GM12878 (cell line): ENCODE measurements at regions of chr6 and their contacts with region 1.

Region 1: GRCh38 chr6:47097092-47097945 is 55.2 kb upstream of the ADGRF1 start:
- DNase-seq: peak; percentile 3
- ATAC-seq: peak; percentile 96
- H3K4me3 ChIP-seq: no peak overlapping the region
- H3K27ac ChIP-seq: no peak overlapping the region
- H3K4me1 ChIP-seq: no peaks in the 10 kb centered on the region
- H3K27me3 ChIP-seq: no peaks in the 10 kb centered on the region
- CTCF ChIP-seq: peak; percentile 66 to 84 (median 66)
- EP300 ChIP-seq: no peak
- POLR2A ChIP-seq: no peak
- RAD21 ChIP-seq: peak; percentile 99

Region 2: DNA sequence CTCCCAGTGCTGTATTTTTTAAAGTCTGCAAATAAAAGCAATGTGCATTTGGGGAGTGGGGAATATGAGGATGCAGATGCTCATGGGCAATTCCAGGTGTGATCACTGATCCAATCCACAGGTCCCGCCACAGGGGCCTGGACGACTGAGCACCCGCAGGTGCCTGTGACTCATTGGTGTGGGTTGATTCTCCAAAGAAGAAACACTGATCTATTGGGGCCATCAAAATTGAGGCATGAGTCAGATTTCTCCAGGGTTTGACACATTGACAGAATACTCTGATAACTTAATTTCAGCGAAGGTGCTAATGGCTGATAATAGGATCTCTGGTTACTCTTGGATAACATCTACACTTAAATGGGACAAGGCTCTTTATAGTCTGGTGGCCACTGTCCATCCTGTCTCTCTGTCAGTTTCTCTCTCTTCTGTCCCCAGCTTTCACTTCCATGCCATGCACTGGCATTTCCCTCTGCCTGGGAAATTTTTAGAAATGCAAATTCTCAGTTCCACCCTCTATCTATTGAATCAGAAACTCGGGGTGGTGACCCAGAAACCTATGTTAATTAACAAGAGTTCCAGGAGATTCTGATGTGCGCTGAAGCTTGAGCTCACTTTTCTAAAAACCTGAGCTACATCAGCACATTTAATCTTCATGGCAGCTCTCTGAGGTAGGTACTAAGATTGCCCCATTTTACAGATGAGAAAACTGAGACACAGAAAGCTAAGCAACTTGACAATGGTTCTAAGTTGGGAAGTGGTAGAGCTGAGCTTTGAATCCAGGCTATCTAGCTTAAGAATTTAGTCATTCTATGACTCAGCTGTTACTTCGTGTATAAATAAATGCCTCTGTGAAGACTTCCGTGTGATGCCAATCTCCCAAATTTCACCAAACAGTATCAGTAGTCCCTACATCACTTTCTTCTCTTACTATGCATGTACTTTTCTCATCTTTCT is 595.9 kb before region 1 on chr6:
- CTCF ChIA-PET with region 1: no interaction called
- POLR2A ChIA-PET with region 1: no interaction called
- RAD21 ChIA-PET with region 1: no interaction called
- SMC1A ChIA-PET with region 1: no interaction called
- in situ Hi-C with region 1: no loop called
- intact Hi-C with region 1: no loop called
- DNase-seq: no peak
- ATAC-seq: peak; percentile 58
- H3K4me3 ChIP-seq: no peak overlapping the region
- H3K27ac ChIP-seq: no peak overlapping the region
- H3K4me1 ChIP-seq: no peaks in the 10 kb centered on the region
- H3K27me3 ChIP-seq: no peaks in the 10 kb centered on the region; a peak in 1 of 4 replicates
- CTCF ChIP-seq: no peak
- EP300 ChIP-seq: no peak
- POLR2A ChIP-seq: no peak
- RAD21 ChIP-seq: no peak

Region 3: DNA sequence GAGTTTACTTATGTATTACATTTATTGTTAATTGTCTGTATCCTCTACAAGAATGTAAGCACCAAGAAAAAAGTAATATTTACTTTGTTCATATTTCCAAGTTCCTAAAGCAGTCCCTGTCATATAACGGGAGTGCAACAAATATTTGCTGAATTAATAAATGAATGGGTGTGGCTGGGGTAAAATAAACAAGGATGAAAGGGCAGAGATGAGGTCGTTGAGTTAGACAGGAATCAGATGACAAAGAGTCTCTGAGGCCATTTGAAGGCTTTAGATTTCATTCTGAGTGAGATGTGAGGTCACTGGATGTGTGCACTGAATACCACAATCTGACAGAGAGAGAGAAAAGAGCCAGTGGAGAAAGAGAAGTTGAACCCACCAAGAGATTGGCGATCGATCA is 480.8 kb before region 1 on chr6:
- CTCF ChIA-PET with region 1: no interaction called
- POLR2A ChIA-PET with region 1: no interaction called
- RAD21 ChIA-PET with region 1: no interaction called
- SMC1A ChIA-PET with region 1: no interaction called
- in situ Hi-C with region 1: no loop called
- intact Hi-C with region 1: no loop called
- DNase-seq: no peak
- ATAC-seq: no peak
- H3K4me3 ChIP-seq: no peak overlapping the region
- H3K27ac ChIP-seq: no peak overlapping the region
- H3K4me1 ChIP-seq: no peaks in the 10 kb centered on the region
- H3K27me3 ChIP-seq: no peaks in the 10 kb centered on the region; a peak in 1 of 4 replicates
- CTCF ChIP-seq: no peak
- EP300 ChIP-seq: no peak
- POLR2A ChIP-seq: no peak
- RAD21 ChIP-seq: no peak

Region 4: GRCh38 chr6:47188588-47189021 is 91.3 kb after region 1 on chr6:
- CTCF ChIA-PET with region 1: no interaction called
- POLR2A ChIA-PET with region 1: no interaction called
- RAD21 ChIA-PET with region 1: no interaction called
- SMC1A ChIA-PET with region 1: no interaction called
- in situ Hi-C with region 1: no loop called
- intact Hi-C with region 1: no loop called
- DNase-seq: no peak
- ATAC-seq: no peak
- H3K4me3 ChIP-seq: no peak overlapping the region
- H3K27ac ChIP-seq: no peak overlapping the region
- H3K4me1 ChIP-seq: no peaks in the 10 kb centered on the region
- H3K27me3 ChIP-seq: peaks cover 0 to 3% of the 10 kb centered on the region in 2 experiments; a peak in 1 of 4 replicates
- CTCF ChIP-seq: no peak
- EP300 ChIP-seq: no peak
- POLR2A ChIP-seq: no peak
- RAD21 ChIP-seq: no peak

Region 5: DNA sequence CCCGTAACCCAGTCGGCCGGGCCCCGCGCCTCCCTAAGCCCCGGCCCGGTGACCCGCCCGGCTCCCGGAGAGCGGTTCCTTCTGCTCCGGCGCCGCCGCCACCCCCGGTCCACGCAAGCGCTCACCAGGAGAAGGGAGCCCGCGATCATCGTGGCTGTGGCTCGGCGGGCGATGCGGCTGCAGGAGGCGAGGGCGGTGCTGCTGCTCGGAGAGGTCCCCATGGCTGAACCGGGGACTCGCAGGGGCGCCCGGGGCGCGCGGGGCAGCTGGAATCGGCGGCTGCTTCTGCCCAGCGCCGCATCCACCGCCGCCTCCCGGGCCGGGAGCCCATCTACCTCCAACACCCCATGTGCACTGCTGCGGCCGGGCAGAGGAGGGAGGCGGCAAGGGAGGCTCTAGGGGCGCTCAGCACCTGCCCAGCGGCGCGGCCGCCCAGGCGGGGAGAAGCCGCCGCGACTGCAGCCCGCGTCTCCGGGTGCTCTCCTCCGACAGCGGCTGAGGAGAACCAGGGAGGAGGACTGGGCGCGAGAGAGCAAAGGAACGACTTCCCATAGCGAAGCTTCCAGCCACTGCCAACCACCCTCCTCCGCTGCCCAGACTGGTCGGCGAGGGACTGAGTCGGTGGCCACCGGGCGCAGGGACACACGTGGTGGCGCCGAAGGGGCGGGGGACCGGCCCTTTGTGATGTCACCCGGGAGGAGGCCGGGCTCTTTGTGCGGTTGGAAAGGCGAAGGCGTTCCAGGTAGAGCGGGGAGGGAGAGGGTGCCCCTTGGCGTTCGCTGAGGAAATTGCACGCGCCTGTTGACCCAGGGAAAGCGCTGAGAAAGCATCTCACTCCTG is 212.2 kb after region 1 on chr6 and contains the start of gene TNFRSF21:
- CTCF ChIA-PET with region 1: interaction called, 122 read pairs
- POLR2A ChIA-PET with region 1: interaction called, 3 read pairs
- RAD21 ChIA-PET with region 1: interaction called, 14 read pairs
- SMC1A ChIA-PET with region 1: interaction called, 37 read pairs
- in situ Hi-C with region 1: loop called (anchors 5 kb)
- intact Hi-C with region 1: loop called (anchors 1 kb)
- DNase-seq: peak; percentile 32
- ATAC-seq: peak; percentile 98
- H3K4me3 ChIP-seq: peak within 1 kb of the TSS; percentile 65
- H3K27ac ChIP-seq: no peak within 1 kb of the TSS
- H3K4me1 ChIP-seq: no peaks in the 10 kb centered on the region
- H3K27me3 ChIP-seq: peaks cover 6 to 13% of the 10 kb centered on the region in 2 experiments; a peak in 3 of 4 replicates
- CTCF ChIP-seq: peak; percentile 94 to 98 (median 96)
- EP300 ChIP-seq: no peak
- POLR2A ChIP-seq: no peak
- RAD21 ChIP-seq: peak; percentile 93
- polyA plus RNA-seq, gene TNFRSF21: 0.09 to 0.11 TPM